ENCODE measurements at regions of chr6 and their contacts with region 1.

Region 1: DNA sequence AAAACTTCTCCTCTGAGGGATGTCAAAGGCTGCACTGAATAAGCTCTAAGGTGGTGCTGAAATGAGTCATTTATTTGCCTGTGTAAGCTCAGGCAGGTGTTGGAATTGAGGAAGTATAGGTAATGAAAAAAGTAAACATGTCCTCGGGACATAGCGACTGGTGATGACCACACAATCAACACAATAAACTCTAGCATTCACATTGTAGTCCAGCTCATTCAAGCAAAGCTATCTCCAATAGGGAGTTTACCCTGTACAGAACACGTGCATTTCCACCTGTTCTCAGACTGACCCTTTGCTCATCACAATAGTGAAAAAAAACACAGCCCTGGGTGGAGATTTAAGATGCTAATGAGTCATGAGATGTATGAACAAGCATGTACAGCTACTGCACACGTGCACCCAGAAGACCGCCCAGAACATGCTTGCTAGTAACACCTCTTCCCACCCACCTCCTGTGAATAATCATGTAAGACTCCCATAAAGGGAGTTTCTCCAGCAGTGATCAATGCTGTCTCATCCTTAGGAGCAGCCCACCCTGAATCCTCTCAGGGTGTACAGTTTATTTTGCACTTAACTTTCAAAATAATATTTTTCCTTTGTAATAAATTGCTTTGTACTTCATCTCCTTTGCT is 33.0 kb upstream of the POU5F1 start:
- DNase-seq: peak; percentile 78
- ATAC-seq: peak; percentile 77
- H3K4me3 Mint-ChIP-seq: peak overlapping the region; percentile 74
- H3K27ac Mint-ChIP-seq: peak overlapping the region; percentile 94
- H3K4me1 Mint-ChIP-seq: peaks cover 63% of the 10 kb centered on the region
- H3K27me3 Mint-ChIP-seq: no peaks in the 10 kb centered on the region

Region 2: GRCh38 chr6:30769088-30769852 is 434.2 kb before region 1 on chr6:
- CTCF ChIA-PET with region 1: no interaction called
- POLR2A ChIA-PET with region 1: no interaction called
- intact Hi-C with region 1: loop called in 1 of 2 experiments (anchors 5 kb)
- DNase-seq: peak; percentile 90
- ATAC-seq: peak; percentile 75
- H3K4me3 Mint-ChIP-seq: peak overlapping the region; percentile 63
- H3K27ac Mint-ChIP-seq: peak overlapping the region; percentile 98
- H3K4me1 Mint-ChIP-seq: peaks cover 86% of the 10 kb centered on the region
- H3K27me3 Mint-ChIP-seq: no peaks in the 10 kb centered on the region

Region 3: DNA sequence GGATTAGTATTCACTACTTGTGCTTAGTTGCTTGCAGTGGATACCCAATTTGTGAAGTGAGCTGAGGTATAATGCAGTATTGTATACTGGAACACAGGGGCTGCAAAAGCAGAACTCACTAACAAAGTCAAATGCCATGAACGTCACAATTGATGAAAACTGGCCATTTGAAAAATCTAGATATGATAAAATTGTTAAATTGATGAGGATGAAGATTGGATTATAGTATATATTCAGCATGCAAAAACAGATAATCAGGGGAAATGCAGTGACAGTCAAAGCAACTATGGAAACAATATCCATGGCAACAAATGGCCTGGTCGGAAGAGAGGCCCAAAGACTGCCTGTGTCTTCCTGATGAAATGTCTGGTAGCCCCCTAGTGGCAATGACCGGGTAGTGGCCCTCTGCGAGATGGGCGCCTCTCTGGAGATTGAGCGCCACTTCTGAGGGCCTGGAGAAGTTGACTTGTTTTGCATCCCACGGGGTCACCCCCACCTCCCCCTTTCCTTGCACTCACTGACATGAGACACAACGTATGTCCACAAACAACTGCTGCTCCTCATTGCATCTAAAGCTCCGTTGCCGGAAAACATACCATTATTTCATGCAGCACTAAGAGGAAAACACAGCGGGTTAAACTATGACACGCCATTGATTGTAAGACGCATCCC is 134.7 kb before region 1 on chr6:
- CTCF ChIA-PET with region 1: no interaction called
- POLR2A ChIA-PET with region 1: no interaction called
- intact Hi-C with region 1: no loop called
- DNase-seq: peak; percentile 82
- ATAC-seq: peak; percentile 99
- H3K4me3 Mint-ChIP-seq: no peak overlapping the region
- H3K27ac Mint-ChIP-seq: no peak overlapping the region
- H3K4me1 Mint-ChIP-seq: peaks cover 2% of the 10 kb centered on the region
- H3K27me3 Mint-ChIP-seq: peaks cover 2% of the 10 kb centered on the region

Region 4: GRCh38 chr6:31271641-31272357 is 68.3 kb after region 1 on chr6 and contains the start of gene HLA-C:
- CTCF ChIA-PET with region 1: interaction called, 3 read pairs
- POLR2A ChIA-PET with region 1: no interaction called
- intact Hi-C with region 1: loop called in 1 of 2 experiments (anchors 1 kb)
- DNase-seq: peak; percentile 92
- ATAC-seq: peak; percentile 89
- H3K4me3 Mint-ChIP-seq: peak within 1 kb of the TSS; percentile 95
- H3K27ac Mint-ChIP-seq: peak within 1 kb of the TSS; percentile 99
- H3K4me1 Mint-ChIP-seq: peaks cover 55% of the 10 kb centered on the region
- H3K27me3 Mint-ChIP-seq: no peaks in the 10 kb centered on the region
- total RNA-seq, gene HLA-C: 660 to 678 TPM

Region 5: GRCh38 chr6:31356946-31357466 is 153.5 kb after region 1 on chr6 and contains the start of gene HLA-B:
- CTCF ChIA-PET with region 1: no interaction called
- POLR2A ChIA-PET with region 1: interaction called, 4 read pairs
- intact Hi-C with region 1: loop called in 1 of 2 experiments (anchors 1 kb)
- DNase-seq: peak; percentile 91
- ATAC-seq: peak; percentile 80
- H3K4me3 Mint-ChIP-seq: peak within 1 kb of the TSS; percentile 98
- H3K27ac Mint-ChIP-seq: peak within 1 kb of the TSS; percentile 99
- H3K4me1 Mint-ChIP-seq: peaks cover 56% of the 10 kb centered on the region
- H3K27me3 Mint-ChIP-seq: peaks cover 5% of the 10 kb centered on the region
- total RNA-seq, gene HLA-B: 2,101 to 2,412 TPM

Region 6: GRCh38 chr6:31493875-31494694 is 290.6 kb after region 1 on chr6:
- CTCF ChIA-PET with region 1: no interaction called
- POLR2A ChIA-PET with region 1: no interaction called
- intact Hi-C with region 1: loop called in 1 of 2 experiments (anchors 5 kb)
- DNase-seq: peak; percentile 91
- ATAC-seq: peak; percentile 58
- H3K4me3 Mint-ChIP-seq: peak overlapping the region; percentile 79
- H3K27ac Mint-ChIP-seq: peak overlapping the region; percentile 90
- H3K4me1 Mint-ChIP-seq: peaks cover 43% of the 10 kb centered on the region
- H3K27me3 Mint-ChIP-seq: no peaks in the 10 kb centered on the region

Measured in activated CD4-positive, alpha-beta T cell treated with anti-CD3 and anti-CD28 coated beads for 36 hours (primary cell).